Posterior vena cava (tissue), 2 donors: ENCODE measurements at regions of chr11 and their contacts with region 1.

Region 1: GRCh38 chr11:109993786-109994185 is 99.4 kb upstream of the ZC3H12C start:
- DNase-seq: no peak

Region 2: DNA sequence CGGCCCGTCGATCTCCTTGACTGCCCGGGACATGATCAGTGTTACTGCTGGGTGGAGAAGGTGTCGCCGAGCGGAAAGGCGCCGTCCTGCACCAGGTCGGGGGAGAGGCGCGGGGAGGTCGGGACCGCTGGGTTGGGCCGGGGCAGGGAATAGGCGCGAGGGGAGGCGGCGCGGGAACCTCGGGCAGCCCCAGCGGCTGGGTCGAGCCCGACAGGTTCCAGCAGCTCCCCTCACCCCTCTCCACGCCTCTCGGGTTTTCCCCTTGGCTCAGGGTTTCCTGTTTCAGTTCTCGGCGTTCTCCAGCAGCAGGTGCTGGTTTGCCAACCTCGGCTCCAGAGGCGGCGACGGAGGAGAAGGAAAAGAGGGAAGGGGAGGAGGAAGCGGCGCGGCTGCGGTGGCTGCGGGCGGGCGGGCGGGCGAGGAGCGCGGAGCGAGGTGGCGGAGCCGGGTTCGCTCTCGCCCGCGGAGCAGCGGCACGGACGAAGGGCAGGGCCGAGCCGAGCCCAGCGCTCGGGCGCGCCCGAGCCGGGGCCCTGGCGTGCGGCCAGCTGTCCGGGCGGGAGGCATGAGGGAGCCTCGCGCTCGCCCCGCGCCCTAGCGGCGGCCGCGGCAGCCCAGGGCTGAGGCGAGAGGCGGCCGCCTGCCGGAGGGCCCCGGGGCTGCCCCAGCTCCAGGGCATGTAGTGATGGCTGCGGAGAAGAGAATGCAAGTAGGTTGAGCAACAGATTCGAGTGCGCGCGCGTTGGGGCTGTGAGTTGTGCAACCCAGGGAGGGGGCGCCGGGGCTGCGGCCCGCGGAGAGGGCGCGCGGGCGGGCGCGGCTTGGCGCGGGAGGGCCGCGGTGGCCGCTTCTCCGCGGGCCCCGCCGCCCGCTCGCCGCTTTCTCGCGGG is 99.0 kb after region 1 on chr11 and contains the start of gene ZC3H12C:
- intact Hi-C with region 1: loop called in 1 of 2 experiments (anchors 10 kb)
- DNase-seq: peak; percentile 91
- total RNA-seq, gene ZC3H12C: 13.6 to 24.8 TPM